Posterior cingulate gyrus (tissue), 11 donors: ENCODE measurements at regions of chr12 and their contacts with region 1.

Region 1: DNA sequence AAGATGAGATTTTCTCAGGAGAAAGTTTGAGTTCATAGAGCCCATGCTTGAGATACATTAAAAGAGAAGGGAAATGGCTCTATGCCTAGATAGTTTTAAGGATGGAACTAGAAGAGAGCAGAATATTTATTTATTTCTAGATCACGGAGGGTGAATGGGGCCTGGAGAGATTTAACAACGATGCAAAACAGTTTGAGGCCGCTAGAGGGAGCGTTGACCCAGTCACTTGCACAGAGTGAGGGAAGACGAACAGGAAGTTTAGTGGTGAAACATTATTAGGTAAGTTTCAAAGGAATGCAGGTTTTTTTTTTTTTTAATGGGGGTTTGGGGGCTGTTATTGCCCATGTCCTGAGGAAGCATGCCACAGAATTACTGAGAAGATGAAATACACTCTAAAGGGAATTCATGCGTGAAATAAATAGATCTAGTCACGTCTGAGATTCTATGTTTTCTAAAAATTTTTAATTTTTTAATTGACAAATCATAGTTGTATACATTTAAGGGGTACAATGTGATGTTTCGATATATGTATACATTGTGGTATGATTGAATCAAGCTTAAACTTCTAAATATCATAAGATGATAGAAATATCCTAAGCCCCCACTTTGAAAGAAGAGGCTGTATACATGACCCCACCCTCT is 14.8 kb upstream of the PPP1R1A start:
- DNase-seq: peak in 6 of 10 donors; percentile 48 to 85 (median 64)

Region 2: GRCh38 chr12:54579696-54580333 is 23.5 kb before region 1 on chr12:
- intact Hi-C with region 1: loop called (anchors 1 kb)
- DNase-seq: peak; percentile 68 to 97 (median 90)

Region 3: GRCh38 chr12:54689984-54690383 is 86.7 kb after region 1 on chr12:
- intact Hi-C with region 1: no loop called
- DNase-seq: no peak

Region 4: DNA sequence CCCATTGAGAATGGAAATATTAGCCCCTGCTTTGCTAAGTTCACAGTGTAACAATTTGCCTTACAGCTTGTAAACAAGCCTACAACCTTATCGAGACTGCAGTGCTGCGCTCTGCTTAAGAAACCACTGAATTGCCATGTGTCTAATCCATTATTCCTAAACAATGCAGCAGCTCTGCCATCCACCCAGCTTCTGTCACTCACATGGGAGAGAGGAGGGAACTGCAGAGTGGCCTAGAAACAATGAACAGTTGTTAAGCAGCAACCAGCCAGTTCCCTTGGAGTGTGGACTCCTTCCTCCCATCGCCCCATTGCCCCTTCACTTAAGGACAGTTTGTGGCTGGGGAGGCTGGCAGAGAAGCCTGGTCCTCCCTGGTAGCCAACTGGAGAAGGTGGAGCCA is 338.4 kb after region 1 on chr12:
- intact Hi-C with region 1: no loop called
- DNase-seq: peak in 2 of 10 donors; percentile 20 to 24